Transverse colon (tissue), 4 donors: ENCODE measurements at regions of chr11 and their contacts with region 1.

Region 1: GRCh38 chr11:3841426-3842350 is 929 bp upstream of the RHOG start:
- DNase-seq: peak; percentile 91
- H3K4me3 ChIP-seq: peak overlapping the region; percentile 75 to 91 (median 84)
- H3K27ac ChIP-seq: peak overlapping the region; percentile 95 to 98 (median 98)
- H3K4me1 ChIP-seq: peaks cover 0 to 51% (median 13%) of the 10 kb centered on the region in 4 donors
- H3K27me3 ChIP-seq: no peaks in the 10 kb centered on the region
- CTCF ChIP-seq: peak; percentile 75 to 81 (median 80)
- EP300 ChIP-seq: no peak
- POLR2A ChIP-seq: peak; percentile 69

Region 2: GRCh38 chr11:3807909-3808860 is 33.5 kb before region 1 on chr11 and contains the start of gene PGAP2:
- in situ Hi-C with region 1: no loop called
- intact Hi-C with region 1: loop called (anchors 5 kb)
- DNase-seq: peak; percentile 77
- H3K4me3 ChIP-seq: peak within 1 kb of the TSS; percentile 41 to 91 (median 66)
- H3K27ac ChIP-seq: peak within 1 kb of the TSS; percentile 73 to 84 (median 81)
- H3K4me1 ChIP-seq: peaks cover 0 to 13% (median 6%) of the 10 kb centered on the region in 4 donors
- H3K27me3 ChIP-seq: no peaks in the 10 kb centered on the region
- CTCF ChIP-seq: peak; percentile 63 to 72 (median 69)
- EP300 ChIP-seq: no peak
- POLR2A ChIP-seq: peak; percentile 11
- total RNA-seq, gene PGAP2: 8.2 to 41.1 (median 37.9) TPM